ENCODE measurements at regions of chr14 and their contacts with region 1.

Region 1: GRCh38 chr14:65449647-65450046 is 37.1 kb downstream of the FUT8 start:
- DNase-seq: no peak
- H3K4me3 ChIP-seq: no peak overlapping the region
- H3K27ac ChIP-seq: no peak overlapping the region
- H3K4me1 ChIP-seq: peaks cover 0 to 3% (median 0%) of the 10 kb centered on the region in 4 experiments; a peak in 2 of 7 replicates
- H3K27me3 ChIP-seq: no peaks in the 10 kb centered on the region
- CTCF ChIP-seq: no peak
- EP300 ChIP-seq: no peak
- POLR2A ChIP-seq: no peak
- RAD21 ChIP-seq: no peak

Region 2: GRCh38 chr14:65434214-65434850 is 15.3 kb before region 1 on chr14:
- CTCF ChIA-PET with region 1: interaction called, 11 read pairs
- POLR2A ChIA-PET with region 1: interaction called, 3 read pairs
- DNase-seq: no peak
- H3K4me3 ChIP-seq: no peak overlapping the region
- H3K27ac ChIP-seq: no peak overlapping the region
- H3K4me1 ChIP-seq: peaks cover 0 to 4% (median under 1%) of the 10 kb centered on the region in 4 experiments; a peak in 2 of 7 replicates
- H3K27me3 ChIP-seq: no peaks in the 10 kb centered on the region
- CTCF ChIP-seq: no peak
- EP300 ChIP-seq: no peak
- POLR2A ChIP-seq: no peak
- RAD21 ChIP-seq: no peak